ENCODE measurements at regions of chr2 and their contacts with region 1.

Region 1: GRCh38 chr2:11583840-11584524 is 50.1 kb downstream of the GREB1 start:
- DNase-seq: peak; percentile 77
- H3K4me3 Mint-ChIP-seq: no peak overlapping the region
- H3K27ac Mint-ChIP-seq: no peak overlapping the region
- H3K4me1 Mint-ChIP-seq: no peaks in the 10 kb centered on the region
- H3K27me3 Mint-ChIP-seq: peaks cover 8% of the 10 kb centered on the region

Region 2: DNA sequence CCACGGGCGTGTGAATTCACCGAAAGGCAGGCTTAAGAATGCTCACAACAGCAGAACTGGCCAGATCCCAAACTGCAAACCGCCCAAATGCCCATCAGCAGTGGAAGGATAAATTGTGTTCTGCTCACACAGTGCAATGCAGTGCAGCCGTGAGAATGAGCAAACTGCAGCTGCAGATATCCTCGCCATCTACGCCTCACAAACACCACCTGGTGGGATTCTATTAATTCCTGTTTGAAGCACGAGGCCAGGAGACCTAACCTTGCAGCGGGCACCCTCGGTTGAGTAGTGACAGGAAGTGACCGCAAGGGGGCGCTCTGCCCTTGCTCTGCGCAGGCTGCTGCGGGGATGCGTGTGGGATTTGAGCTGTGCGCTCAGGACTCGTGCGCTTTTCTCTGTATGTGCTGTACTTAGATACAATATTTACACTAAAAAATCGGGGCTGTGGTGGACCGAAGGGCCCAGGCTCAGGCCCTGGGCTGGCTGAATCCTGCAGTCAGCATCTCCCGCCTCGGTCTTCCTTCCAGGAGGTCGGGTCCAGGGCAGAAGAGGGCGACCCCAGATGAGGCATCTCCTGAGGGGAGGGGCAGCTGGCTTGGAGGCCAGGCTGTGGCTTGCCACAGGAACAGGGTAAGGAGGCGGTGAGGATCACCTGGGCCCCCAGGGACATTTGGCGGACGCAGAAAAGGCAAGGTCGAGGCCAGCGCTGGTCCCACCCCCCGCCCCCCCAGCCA is 751.6 kb before region 1 on chr2:
- CTCF ChIA-PET with region 1: interaction called, 13 read pairs
- DNase-seq: peak; percentile 87
- H3K4me3 Mint-ChIP-seq: no peak overlapping the region
- H3K27ac Mint-ChIP-seq: no peak overlapping the region
- H3K4me1 Mint-ChIP-seq: peaks cover 4% of the 10 kb centered on the region
- H3K27me3 Mint-ChIP-seq: peaks cover 64% of the 10 kb centered on the region

Region 3: DNA sequence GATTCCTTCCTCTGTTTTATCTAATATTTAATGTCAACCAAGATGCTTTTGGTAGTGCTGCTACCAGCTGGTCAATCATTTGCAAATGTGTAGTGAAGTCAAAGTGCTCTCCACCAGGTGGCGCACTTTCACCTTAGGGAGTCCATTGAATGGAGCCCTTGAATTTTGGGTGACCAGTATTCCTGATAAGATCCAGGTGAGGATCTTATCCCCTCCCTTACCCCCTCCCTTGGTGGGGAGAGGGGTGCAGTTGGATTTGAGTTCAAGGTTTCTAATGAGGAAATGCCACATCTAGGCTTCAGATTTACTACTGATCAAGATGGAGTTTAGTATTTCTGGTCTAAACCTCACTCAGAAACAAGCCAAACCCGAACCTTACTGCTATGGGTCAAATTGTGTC is 106.0 kb before region 1 on chr2:
- CTCF ChIA-PET with region 1: interaction called, 113 read pairs
- DNase-seq: peak; percentile 87
- H3K4me3 Mint-ChIP-seq: no peak overlapping the region
- H3K27ac Mint-ChIP-seq: no peak overlapping the region
- H3K4me1 Mint-ChIP-seq: peaks cover 1% of the 10 kb centered on the region
- H3K27me3 Mint-ChIP-seq: peaks cover 37% of the 10 kb centered on the region

Region 4: GRCh38 chr2:11564816-11565567 is 19.0 kb before region 1 on chr2:
- CTCF ChIA-PET with region 1: interaction called, 14 read pairs
- DNase-seq: no peak
- H3K4me3 Mint-ChIP-seq: no peak overlapping the region
- H3K27ac Mint-ChIP-seq: no peak overlapping the region
- H3K4me1 Mint-ChIP-seq: no peaks in the 10 kb centered on the region
- H3K27me3 Mint-ChIP-seq: peaks cover 5% of the 10 kb centered on the region

Region 5: DNA sequence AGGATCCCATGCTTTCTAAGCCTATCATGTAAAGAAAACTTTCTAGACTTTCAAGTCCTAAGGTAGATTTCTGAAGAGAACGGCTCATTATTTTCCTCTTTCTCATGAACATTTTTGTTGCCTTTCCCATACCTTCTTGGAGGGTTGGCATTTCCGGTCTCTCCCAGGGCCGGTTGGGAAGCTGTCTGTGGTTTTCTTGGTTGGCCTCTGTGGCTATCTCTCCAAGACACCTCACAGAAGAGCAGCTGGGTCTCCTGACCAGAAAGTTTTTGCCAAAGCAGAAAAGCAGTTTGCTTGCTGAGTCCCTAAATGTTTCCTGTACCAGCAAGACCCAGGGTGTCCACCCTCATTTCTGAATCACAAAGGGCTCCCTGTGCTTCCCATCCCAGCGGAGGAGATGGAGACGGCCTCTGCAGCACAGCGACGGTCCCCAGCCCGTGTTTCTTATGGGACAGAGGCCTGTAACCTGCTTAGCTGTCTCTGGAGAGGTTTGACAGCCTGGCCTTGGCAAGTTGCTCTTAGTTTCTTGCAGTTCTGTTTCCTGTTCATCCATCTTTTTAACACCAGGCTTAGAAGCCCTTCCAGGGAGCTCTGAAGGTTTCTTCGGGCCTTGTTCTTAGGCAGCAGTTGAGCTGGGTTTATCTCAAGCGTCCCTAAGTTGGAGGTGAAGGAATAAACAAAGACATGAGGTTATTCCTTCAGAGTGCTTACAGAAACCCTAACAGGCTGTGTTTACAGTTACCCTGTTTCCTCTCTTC is 10.4 kb before region 1 on chr2:
- CTCF ChIA-PET with region 1: interaction called, 20 read pairs
- DNase-seq: no peak
- H3K4me3 Mint-ChIP-seq: no peak overlapping the region
- H3K27ac Mint-ChIP-seq: no peak overlapping the region
- H3K4me1 Mint-ChIP-seq: no peaks in the 10 kb centered on the region
- H3K27me3 Mint-ChIP-seq: peaks cover 15% of the 10 kb centered on the region